Left lung (tissue), 14 donors: ENCODE measurements at regions of chr7 and their contacts with region 1.

Region 1: DNA sequence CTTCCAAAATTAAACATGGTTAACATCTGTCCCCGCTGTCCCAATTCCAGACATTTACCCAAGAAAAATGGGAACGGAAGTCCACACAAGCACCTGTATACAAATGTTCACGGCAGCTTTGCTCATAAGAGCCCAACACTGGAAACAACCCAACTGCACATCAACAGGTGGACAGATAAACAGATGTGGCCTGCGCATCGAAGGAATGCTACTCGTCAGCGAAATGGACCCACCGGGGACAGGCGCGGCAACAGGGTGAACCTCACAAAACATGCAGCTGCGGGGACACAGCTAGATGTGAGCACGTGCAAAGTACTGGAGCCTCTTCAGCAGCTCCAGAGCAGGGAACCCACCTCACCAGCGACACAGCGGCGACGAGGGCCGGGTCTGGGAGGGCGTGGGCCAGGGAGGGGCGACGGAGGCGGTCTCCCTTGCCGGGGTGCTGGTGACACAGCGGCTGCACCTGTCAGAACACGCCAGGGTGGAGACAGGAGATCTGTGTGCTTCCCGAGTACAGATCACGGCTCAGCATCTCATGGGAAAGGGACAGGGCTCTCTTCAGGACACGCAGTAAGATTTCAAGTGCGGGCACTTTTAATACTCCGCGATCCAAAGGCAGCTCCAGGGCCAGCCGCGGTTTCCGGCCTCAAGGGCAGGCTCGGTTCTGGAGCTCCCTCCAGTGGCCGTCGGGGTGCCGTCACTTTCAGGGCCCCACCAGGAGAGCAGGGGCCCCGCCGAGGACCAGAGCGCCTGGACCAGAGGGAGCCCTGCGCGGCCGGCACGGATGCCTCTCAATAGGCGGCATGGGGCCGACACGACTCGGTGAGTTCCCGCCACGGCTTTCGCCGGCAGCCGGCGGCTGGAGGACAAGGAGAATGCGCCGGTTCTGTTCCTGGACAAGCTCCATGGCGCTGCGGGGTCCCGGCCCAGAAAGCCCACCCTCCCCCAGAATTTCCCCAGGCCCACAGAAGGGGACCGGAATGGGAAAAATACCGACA is 21.2 kb downstream of the GPR146 start:
- DNase-seq: peak in 3 of 4 donors; percentile 82 to 95 (median 84)
- ATAC-seq: peak; percentile 99
- H3K4me3 ChIP-seq: no peak overlapping the region
- H3K27ac ChIP-seq: no peak overlapping the region
- H3K4me1 ChIP-seq: peaks cover 8 to 27% of the 10 kb centered on the region in 2 donors
- H3K27me3 ChIP-seq: peaks cover 0 to 24% of the 10 kb centered on the region in 2 donors
- CTCF ChIP-seq: peak; percentile 89 to 93

Region 2: GRCh38 chr7:984361-985126 is 81.0 kb before region 1 on chr7:
- intact Hi-C with region 1: no loop called
- DNase-seq: peak in 1 of 4 donors; percentile 77
- ATAC-seq: no peak
- H3K4me3 ChIP-seq: no peak overlapping the region
- H3K27ac ChIP-seq: no peak overlapping the region
- H3K4me1 ChIP-seq: no peaks in the 10 kb centered on the region
- H3K27me3 ChIP-seq: peaks cover 0 to 78% of the 10 kb centered on the region in 2 donors
- CTCF ChIP-seq: no peak

Region 3: DNA sequence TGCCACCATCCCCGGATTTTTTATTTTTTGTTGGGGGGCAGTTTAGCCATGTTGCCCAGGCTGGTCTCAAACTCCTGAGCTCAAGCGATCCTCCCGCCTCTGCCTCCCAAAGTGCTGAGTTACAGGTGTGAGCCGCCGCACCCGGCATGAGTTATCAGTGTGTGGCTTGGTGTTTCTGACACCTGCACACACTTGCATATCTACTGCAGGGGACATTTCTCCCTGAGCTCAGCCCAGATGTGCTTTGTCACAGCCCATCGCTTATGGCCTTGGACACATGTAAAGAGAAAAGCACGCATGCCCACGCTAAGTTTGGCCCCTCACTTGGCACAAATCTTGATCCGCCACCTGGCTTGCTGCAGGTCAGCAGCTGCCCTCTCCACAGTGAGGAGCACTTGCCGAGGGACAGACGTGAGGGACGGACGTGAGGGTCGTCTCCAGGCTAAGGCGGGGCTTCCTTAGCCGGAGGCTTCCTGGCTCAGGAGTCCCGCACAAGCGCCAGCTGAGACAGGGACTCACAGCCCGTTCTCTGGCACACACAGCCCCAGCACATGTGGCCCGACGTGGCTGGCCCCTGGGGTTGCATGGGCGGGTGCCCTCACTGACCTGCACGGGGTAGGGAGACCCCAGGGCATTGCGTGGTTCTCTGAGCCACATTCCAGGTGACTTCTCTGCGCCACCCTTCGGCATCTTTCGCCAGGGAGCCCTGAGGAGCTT is 70.8 kb before region 1 on chr7:
- intact Hi-C with region 1: loop called in 1 of 2 experiments (anchors 2 kb)
- DNase-seq: no peak
- ATAC-seq: no peak
- H3K4me3 ChIP-seq: no peak overlapping the region
- H3K27ac ChIP-seq: no peak overlapping the region
- H3K4me1 ChIP-seq: peaks cover 0 to 9% of the 10 kb centered on the region in 2 donors
- H3K27me3 ChIP-seq: peaks cover 0 to 26% of the 10 kb centered on the region in 2 donors
- CTCF ChIP-seq: no peak

Region 4: GRCh38 chr7:1800902-1801301 is 735.3 kb after region 1 on chr7:
- intact Hi-C with region 1: no loop called
- DNase-seq: no peak
- ATAC-seq: no peak
- H3K4me3 ChIP-seq: no peak overlapping the region
- H3K27ac ChIP-seq: no peak overlapping the region
- H3K4me1 ChIP-seq: no peaks in the 10 kb centered on the region
- H3K27me3 ChIP-seq: peaks cover 0 to 11% of the 10 kb centered on the region in 2 donors
- CTCF ChIP-seq: no peak